Activated CD8-positive, alpha-beta T cell treated with anti-CD3 and anti-CD28 coated beads for 36 hours (primary cell): ENCODE measurements at regions of chr2 and their contacts with region 1.

Region 1: DNA sequence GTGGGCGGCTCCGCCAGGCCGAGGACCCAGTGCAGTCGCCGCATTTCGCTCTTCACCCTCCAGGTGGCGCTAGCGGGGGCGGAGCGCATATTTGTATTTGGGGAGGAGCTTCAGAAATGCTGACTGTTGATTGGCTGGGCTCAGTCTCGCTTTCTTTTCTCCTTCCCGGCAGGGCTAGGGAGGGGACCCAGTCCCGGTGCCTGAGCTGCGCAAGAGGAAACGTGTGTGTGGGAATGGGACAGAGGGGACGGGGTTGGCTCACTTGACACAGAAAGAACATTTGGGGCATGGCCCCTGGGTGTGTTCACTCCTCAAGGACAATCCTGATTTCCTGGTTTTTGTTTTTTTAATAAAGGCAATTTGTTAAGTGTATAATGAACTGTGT is 20.3 kb upstream of the DNMT3A start:
- DNase-seq: peak; percentile 97
- ATAC-seq: peak; percentile 93
- H3K4me3 Mint-ChIP-seq: peak overlapping the region; percentile 80
- H3K27ac Mint-ChIP-seq: peak overlapping the region; percentile 97
- H3K4me1 Mint-ChIP-seq: peaks cover 17% of the 10 kb centered on the region
- H3K27me3 Mint-ChIP-seq: no peaks in the 10 kb centered on the region
- CTCF ChIP-seq: peak; percentile 90

Region 2: GRCh38 chr2:25323042-25323514 is 39.0 kb before region 1 on chr2:
- CTCF ChIA-PET with region 1: interaction called, 23 read pairs
- POLR2A ChIA-PET with region 1: interaction called, 3 read pairs
- intact Hi-C with region 1: no loop called
- DNase-seq: peak; percentile 87
- ATAC-seq: peak; percentile 75
- H3K4me3 Mint-ChIP-seq: peak overlapping the region; percentile 65
- H3K27ac Mint-ChIP-seq: peak overlapping the region; percentile 97
- H3K4me1 Mint-ChIP-seq: peaks cover 64% of the 10 kb centered on the region
- H3K27me3 Mint-ChIP-seq: no peaks in the 10 kb centered on the region
- CTCF ChIP-seq: no peak

Region 3: DNA sequence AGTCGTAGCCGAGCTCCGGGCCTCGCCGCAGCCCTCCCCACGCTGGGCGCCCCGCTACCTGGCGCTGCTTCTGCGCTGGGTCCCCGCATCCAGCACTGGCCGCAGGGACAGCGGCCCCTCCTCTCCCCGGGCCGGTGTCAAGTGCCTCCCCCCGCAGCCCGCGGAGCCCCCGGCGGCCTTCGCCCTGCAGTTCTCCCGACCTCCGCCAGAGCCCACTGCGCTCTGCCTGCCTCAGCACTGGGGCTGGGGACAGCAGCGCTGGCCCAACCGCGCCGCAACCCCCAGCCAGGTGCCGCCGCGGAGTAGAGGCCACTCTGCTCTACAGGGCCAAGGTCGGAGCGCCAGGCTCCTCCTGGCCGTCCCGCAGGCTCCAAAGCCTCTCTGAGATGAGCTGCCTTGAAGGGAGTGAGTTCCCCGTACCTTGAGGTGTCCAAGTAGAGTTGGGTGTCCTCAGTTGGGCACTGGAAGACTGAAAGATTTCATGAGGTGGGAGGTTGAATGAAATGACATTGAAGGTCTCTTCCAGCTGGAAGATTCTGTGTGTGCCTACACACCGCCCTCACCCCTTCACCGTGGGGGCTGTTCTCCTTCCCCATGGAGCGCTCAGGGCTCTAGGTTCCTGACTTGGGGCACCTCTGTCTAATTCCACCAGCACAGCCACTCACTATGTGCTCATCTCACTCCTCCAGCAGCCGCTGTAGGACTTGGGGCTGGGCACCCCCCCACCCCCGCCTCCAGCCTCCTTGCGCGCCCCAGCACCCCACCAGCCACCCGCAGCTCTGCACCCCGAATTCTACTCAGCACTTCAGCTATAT is 19.5 kb before region 1 on chr2:
- CTCF ChIA-PET with region 1: interaction called, 69 read pairs
- POLR2A ChIA-PET with region 1: interaction called, 17 read pairs
- intact Hi-C with region 1: no loop called
- DNase-seq: peak; percentile 88
- ATAC-seq: peak; percentile 84
- H3K4me3 Mint-ChIP-seq: peak overlapping the region; percentile 76
- H3K27ac Mint-ChIP-seq: peak overlapping the region; percentile 80
- H3K4me1 Mint-ChIP-seq: peaks cover 54% of the 10 kb centered on the region
- H3K27me3 Mint-ChIP-seq: no peaks in the 10 kb centered on the region
- CTCF ChIP-seq: peak; percentile 97

Region 4: GRCh38 chr2:25417715-25418369 is 55.8 kb after region 1 on chr2:
- CTCF ChIA-PET with region 1: interaction called, 11 read pairs
- POLR2A ChIA-PET with region 1: no interaction called
- intact Hi-C with region 1: no loop called
- DNase-seq: peak; percentile 38
- ATAC-seq: peak; percentile 51
- H3K4me3 Mint-ChIP-seq: no peak overlapping the region
- H3K27ac Mint-ChIP-seq: peak overlapping the region; percentile 25
- H3K4me1 Mint-ChIP-seq: peaks cover 14% of the 10 kb centered on the region
- H3K27me3 Mint-ChIP-seq: no peaks in the 10 kb centered on the region
- CTCF ChIP-seq: no peak